WTC11 (cell line): ENCODE measurements at regions of chr19 and their contacts with region 1.

Region 1: GRCh38 chr19:29844891-29845572 is 33.2 kb downstream of the CCNE1 start:
- DNase-seq: peak; percentile 93
- ATAC-seq: peak; percentile 83
- H3K4me3 Mint-ChIP-seq: peak overlapping the region; percentile 94
- H3K27ac Mint-ChIP-seq: peak overlapping the region; percentile 93
- H3K4me1 Mint-ChIP-seq: peaks cover 23% of the 10 kb centered on the region
- H3K27me3 Mint-ChIP-seq: peaks cover 16% of the 10 kb centered on the region
- CTCF ChIP-seq: no peak

Region 2: GRCh38 chr19:29785955-29786589 is 59.0 kb before region 1 on chr19:
- CTCF ChIA-PET with region 1: interaction called, 11 read pairs
- POLR2A ChIA-PET with region 1: no interaction called
- DNase-seq: peak; percentile 65
- ATAC-seq: peak; percentile 89
- H3K4me3 Mint-ChIP-seq: no peak overlapping the region
- H3K27ac Mint-ChIP-seq: no peak overlapping the region
- H3K4me1 Mint-ChIP-seq: no peaks in the 10 kb centered on the region
- H3K27me3 Mint-ChIP-seq: no peaks in the 10 kb centered on the region
- CTCF ChIP-seq: no peak